ENCODE measurements at regions of chr21 and their contacts with region 1.

Region 1: GRCh38 chr21:20163167-20163566 is 835.0 kb upstream of the NCAM2 start:
- DNase-seq: no peak
- H3K4me3 ChIP-seq: no peak overlapping the region
- CTCF ChIP-seq: no peak
- POLR2A ChIP-seq: no peak

Region 2: DNA sequence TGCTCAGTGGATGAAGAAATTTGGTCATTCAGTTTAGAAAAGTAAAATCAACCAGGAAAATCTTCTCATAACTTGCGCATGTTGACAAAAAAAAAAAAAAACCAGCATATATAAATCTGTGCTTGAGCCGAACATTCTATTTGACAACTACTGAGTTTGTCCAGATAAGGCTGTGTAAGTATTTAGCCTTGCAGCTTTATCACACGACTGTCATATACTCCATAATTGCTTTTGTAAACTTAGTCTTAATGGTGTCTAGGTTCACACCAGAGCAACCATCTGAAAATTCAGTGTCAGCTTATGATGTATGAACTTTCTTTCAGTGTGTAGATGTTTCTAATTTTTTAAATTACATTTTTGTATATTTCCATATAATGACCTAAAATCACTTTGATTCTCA is 585.8 kb before region 1 on chr21:
- intact Hi-C with region 1: loop called (anchors 5 kb)
- DNase-seq: no peak
- H3K4me3 ChIP-seq: no peak overlapping the region
- CTCF ChIP-seq: no peak
- POLR2A ChIP-seq: no peak

Region 3: DNA sequence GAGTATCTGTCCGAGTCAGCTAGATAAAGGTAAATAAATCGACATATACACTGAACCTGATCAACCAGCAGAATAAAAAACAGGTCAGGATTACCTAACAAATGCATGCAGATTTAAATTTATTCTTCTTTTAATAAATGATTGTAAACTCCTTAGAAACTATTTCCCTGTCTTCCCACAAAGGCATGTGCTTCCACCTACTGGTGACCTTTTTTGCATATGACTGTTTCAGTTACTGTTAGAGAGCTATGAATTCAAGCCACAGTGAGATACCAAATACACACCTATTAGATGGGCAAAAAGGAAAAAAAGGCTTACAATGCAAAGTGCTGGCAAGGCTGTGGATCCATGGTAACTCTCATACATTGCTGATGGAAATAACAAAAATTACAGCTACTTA is 122.4 kb before region 1 on chr21:
- intact Hi-C with region 1: no loop called
- DNase-seq: no peak
- H3K4me3 ChIP-seq: no peak overlapping the region
- CTCF ChIP-seq: no peak
- POLR2A ChIP-seq: no peak

Region 4: DNA sequence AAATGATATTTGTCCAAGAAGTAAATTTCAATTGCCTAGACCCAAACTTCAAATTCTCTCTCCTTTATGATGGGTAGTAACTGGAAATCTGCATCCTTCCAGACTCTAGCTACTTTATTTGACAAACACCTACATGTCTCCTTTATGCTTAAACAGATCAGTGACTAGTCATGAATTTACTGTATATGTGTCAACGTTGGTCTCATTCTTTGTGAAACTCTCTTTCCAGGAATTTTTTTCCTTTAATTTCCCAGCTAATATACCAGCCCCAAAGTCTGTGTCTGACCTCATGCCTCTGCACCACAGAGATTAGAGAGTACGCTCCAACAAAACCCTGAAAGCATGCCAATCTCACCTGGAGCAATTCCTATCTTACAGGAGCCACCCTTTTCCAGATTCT is 23.9 kb after region 1 on chr21:
- intact Hi-C with region 1: no loop called
- DNase-seq: no peak
- H3K4me3 ChIP-seq: no peak overlapping the region
- CTCF ChIP-seq: no peak
- POLR2A ChIP-seq: no peak

Region 5: DNA sequence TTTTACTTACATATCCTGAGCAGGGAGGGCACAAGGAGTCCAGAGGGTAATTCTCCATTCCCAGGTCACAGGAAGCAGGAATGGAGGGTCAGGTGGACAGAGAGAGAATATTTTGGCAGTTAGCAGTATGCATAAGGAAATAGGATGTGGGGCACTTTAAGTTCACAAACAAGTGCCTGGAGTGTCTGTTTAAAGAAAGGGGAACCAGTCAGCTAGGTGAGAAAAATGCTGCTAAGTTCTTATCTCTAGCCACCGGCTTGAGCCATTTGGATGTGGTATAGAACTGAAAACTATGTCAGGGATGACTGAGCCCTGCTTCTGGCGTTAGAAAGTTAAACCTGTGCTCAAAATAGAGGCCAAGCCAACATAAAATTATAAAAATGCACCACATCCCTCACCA is 95.4 kb after region 1 on chr21:
- intact Hi-C with region 1: no loop called
- DNase-seq: no peak
- H3K4me3 ChIP-seq: no peak overlapping the region
- CTCF ChIP-seq: no peak
- POLR2A ChIP-seq: no peak

Measured in lower leg skin (tissue), 4 donors.